ENCODE measurements at regions of chr19 and their contacts with region 1.

Region 1: DNA sequence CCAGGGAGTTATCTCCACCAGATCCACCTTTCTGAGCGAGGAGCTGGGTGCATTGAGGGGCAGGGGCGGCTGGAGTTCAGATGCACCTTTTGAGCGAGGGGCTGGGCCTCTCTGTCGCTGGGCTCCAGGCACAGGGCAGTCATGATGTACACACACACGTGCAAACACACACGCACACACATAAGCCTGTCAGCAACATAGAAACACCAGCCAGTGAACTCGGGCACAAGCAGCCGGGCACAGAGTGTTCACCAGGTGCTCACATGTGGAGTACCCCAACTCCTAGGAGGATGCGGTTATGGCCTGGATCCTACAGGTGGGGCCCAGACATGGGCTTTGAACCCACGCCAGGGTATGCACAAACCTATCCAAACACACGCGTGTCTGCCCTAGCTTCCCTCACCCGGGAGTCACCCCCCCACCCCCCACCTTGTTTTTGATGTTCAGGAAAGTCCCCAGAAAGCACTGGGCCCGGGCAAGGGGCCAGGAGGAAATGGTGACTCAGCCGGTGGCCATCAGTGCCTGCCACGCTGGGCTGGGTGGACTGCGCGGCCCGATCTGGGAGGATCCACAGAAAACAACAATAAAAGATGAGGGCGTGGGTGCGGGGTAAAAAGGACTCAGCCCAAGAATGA is 13.3 kb downstream of the ARRDC2 start:
- DNase-seq: peak; percentile 75 to 95
- H3K4me3 ChIP-seq: peak overlapping the region; percentile 11 to 26
- H3K27ac ChIP-seq: peak overlapping the region; percentile 89 to 90
- H3K4me1 ChIP-seq: peaks cover 38 to 71% of the 10 kb centered on the region in 2 donors
- H3K27me3 ChIP-seq: no peaks in the 10 kb centered on the region
- CTCF ChIP-seq: no peak

Region 2: DNA sequence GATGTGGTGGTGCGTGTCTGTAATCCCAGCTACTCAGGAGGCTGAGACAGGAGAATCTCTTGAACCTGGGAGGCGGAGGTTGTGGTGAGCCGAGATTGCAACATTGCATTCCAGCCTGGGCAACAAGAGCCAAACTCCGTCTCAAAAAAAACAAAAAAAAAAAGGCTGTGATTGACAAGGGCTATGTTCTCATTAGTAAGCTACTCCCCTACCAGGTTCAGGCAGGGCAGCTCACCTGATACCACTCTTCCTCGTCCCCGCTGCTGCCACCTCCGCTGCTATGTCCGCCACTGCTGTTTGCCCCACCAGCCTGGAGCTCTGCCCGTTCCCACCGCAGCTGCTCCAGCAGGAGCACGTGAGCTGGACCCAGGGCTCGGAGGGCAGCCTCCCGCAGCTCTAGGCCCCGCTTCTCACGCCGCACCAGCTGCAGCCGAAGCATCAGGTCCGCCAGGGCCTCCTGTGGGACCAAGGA is 766.1 kb before region 1 on chr19:
- intact Hi-C with region 1: no loop called
- DNase-seq: no peak
- H3K4me3 ChIP-seq: no peak overlapping the region
- H3K27ac ChIP-seq: no peak overlapping the region
- H3K4me1 ChIP-seq: no peaks in the 10 kb centered on the region
- H3K27me3 ChIP-seq: no peaks in the 10 kb centered on the region
- CTCF ChIP-seq: no peak

Region 3: GRCh38 chr19:17692566-17692965 is 328.7 kb before region 1 on chr19:
- intact Hi-C with region 1: no loop called
- DNase-seq: no peak
- H3K4me3 ChIP-seq: no peak overlapping the region
- H3K27ac ChIP-seq: no peak overlapping the region
- H3K4me1 ChIP-seq: no peaks in the 10 kb centered on the region
- H3K27me3 ChIP-seq: no peaks in the 10 kb centered on the region
- CTCF ChIP-seq: no peak

Region 4: DNA sequence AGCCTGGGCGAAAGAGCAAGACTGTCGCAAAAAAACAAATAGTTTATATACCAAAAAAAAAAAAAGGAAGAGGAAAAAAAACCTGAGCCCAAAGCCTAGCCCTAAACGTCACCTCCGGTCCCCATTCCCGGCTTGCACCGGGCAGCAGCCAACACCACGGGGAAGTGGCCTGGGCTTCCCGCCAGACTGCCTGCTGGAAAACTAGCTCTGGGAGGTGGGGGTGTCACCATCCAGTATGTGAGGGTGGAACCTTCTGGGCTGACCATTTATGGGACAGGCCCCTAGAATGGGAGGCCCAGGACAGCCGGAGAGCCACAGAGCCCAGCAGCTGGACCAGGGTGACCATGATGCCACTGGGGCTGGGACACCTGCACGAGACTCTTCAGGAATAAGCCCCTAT is 28.1 kb after region 1 on chr19:
- intact Hi-C with region 1: loop called (anchors 1 kb)
- DNase-seq: peak; percentile 77 to 96
- H3K4me3 ChIP-seq: no peak overlapping the region
- H3K27ac ChIP-seq: peak overlapping the region; percentile 85 to 87
- H3K4me1 ChIP-seq: peaks cover 22 to 53% of the 10 kb centered on the region in 2 donors
- H3K27me3 ChIP-seq: no peaks in the 10 kb centered on the region
- CTCF ChIP-seq: no peak

Measured in ascending aorta (tissue), 2 donors.